ENCODE measurements at regions of chr22 and their contacts with region 1.

Region 1: DNA sequence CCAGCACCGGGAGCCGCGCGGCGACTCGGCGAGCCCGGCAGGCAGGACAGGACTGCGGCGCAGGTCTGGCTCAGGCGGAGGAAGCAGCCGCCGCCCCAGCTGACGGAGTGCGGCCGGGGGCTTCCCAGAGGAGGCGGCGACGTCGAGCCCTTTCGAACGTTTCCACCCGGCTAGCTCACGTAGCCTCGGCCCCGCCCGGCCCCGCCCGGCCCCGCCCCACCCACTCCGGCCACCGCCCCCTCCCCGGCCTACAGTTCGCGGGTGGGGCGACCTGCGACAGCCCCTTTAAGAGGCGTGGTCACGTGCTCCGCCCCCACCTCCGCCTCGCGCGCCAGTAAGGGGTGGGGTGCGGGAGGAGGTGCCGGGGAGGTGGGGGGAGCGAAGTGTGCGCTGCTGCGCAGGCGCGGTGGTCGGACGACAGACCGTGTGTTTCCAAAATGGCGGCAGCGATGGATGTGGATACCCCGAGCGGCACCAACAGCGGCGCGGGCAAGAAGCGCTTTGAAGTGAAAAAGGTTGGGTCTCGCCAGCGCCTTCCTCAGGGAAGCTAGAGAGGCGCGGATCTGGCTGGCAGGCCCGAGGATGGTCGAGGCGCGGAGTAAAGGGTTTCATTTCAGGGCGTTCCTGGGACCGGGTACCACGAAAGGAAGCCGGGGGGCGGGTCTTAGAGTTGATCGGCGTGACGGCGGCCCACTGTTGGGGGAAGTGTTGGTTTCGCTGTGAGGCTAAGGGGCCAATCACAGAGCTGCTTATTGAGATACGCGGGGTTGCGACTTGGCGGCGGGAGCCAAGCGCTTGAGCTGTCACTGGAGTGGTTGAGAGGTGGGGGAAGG is at the start of gene RBX1:
- DNase-seq: peak; percentile 99 to 100 (median 99)
- H3K4me3 ChIP-seq: peak within 1 kb of the TSS; percentile 86 to 92
- H3K4me3 Mint-ChIP-seq: peak within 1 kb of the TSS; percentile 96 to 100 (median 99)
- H3K27ac ChIP-seq: peak within 1 kb of the TSS; percentile 98
- H3K27ac Mint-ChIP-seq: peak within 1 kb of the TSS; percentile 97 to 100 (median 100)
- H3K4me1 ChIP-seq: peaks cover 33% of the 10 kb centered on the region
- H3K4me1 Mint-ChIP-seq: peaks cover 17 to 36% (median 30%) of the 10 kb centered on the region in 4 donors
- H3K27me3 ChIP-seq: no peaks in the 10 kb centered on the region
- H3K27me3 Mint-ChIP-seq: peaks cover 0 to 5% of the 10 kb centered on the region in 2 donors
- total RNA-seq, gene RBX1: 39.6 to 46.4 TPM

Region 2: DNA sequence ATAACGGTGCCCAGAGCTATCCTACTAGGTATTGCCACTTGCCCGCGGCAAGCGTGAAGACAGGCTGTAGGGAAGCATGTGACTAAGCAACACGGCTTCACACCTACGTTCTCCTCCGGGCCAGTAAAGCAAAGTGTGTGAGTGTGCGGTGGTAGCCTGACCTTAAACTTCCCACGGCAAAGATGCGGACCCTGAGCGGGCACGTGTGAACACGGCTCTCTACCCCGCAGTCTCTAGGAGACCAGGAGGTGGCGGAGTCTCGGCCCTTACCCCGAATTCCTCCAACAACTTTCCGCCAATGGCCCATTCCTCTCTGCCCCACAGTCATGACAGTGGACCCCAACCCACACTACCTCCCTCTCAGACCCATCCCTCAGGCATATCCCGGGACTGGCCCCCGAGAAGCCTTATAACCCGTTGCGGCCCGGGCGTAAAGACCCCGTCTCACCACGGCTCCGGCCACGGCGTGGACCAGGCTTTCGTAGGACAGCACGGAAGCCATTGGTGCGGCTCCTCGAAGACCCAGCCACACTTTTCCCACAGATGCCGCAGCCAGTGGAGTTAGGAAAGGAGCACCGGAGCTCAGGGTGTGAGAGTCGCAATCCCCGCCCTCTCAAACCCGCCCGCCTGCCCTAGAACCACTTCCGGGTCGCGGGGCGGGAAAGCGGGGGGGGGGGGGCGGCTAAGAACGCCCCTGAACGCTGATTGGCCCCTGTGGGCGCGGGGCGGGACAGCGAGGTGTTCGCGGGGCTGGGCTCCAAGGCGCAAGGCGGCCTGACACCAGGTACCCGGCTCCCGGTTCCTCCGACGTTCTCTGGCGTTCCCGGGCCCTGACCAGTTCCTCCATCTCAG is 132.2 kb before region 1 on chr22 and contains the start of gene SLC25A17:
- CTCF ChIA-PET with region 1: no interaction called
- POLR2A ChIA-PET with region 1: no interaction called
- intact Hi-C with region 1: loop called (anchors 5 kb)
- DNase-seq: peak; percentile 81 to 84 (median 82)
- H3K4me3 ChIP-seq: peak within 1 kb of the TSS; percentile 92 to 95
- H3K4me3 Mint-ChIP-seq: peak within 1 kb of the TSS; percentile 92 to 99 (median 97)
- H3K27ac ChIP-seq: peak within 1 kb of the TSS; percentile 81
- H3K27ac Mint-ChIP-seq: peak within 1 kb of the TSS; percentile 82 to 98 (median 95)
- H3K4me1 ChIP-seq: peaks cover 27% of the 10 kb centered on the region
- H3K4me1 Mint-ChIP-seq: peaks cover 29 to 46% (median 36%) of the 10 kb centered on the region in 4 donors
- H3K27me3 ChIP-seq: no peaks in the 10 kb centered on the region
- H3K27me3 Mint-ChIP-seq: no peaks in the 10 kb centered on the region
- total RNA-seq, gene SLC25A17: 15.4 to 15.6 TPM

Region 3: GRCh38 chr22:40973099-40973498 is 21.9 kb after region 1 on chr22:
- CTCF ChIA-PET with region 1: no interaction called
- POLR2A ChIA-PET with region 1: interaction called, 16 read pairs
- intact Hi-C with region 1: no loop called
- DNase-seq: no peak
- H3K4me3 ChIP-seq: no peak overlapping the region
- H3K4me3 Mint-ChIP-seq: no peak overlapping the region
- H3K27ac ChIP-seq: no peak overlapping the region
- H3K27ac Mint-ChIP-seq: no peak overlapping the region
- H3K4me1 ChIP-seq: no peaks in the 10 kb centered on the region
- H3K4me1 Mint-ChIP-seq: peaks cover 0 to 5% (median 0%) of the 10 kb centered on the region in 4 donors
- H3K27me3 ChIP-seq: no peaks in the 10 kb centered on the region
- H3K27me3 Mint-ChIP-seq: no peaks in the 10 kb centered on the region

Region 4: GRCh38 chr22:41096841-41097240 is 145.7 kb after region 1 on chr22:
- CTCF ChIA-PET with region 1: interaction called, 8 read pairs
- POLR2A ChIA-PET with region 1: interaction called, 211 read pairs
- intact Hi-C with region 1: no loop called
- DNase-seq: no peak
- H3K4me3 ChIP-seq: no peak overlapping the region
- H3K4me3 Mint-ChIP-seq: peak overlapping the region; percentile 43 to 100 (median 88)
- H3K27ac ChIP-seq: no peak overlapping the region
- H3K27ac Mint-ChIP-seq: peak overlapping the region in 6 of 7 donors; percentile 3 to 88 (median 44)
- H3K4me1 ChIP-seq: peaks cover 71% of the 10 kb centered on the region
- H3K4me1 Mint-ChIP-seq: peaks cover 43 to 87% (median 61%) of the 10 kb centered on the region in 4 donors
- H3K27me3 ChIP-seq: no peaks in the 10 kb centered on the region
- H3K27me3 Mint-ChIP-seq: no peaks in the 10 kb centered on the region

Region 5: DNA sequence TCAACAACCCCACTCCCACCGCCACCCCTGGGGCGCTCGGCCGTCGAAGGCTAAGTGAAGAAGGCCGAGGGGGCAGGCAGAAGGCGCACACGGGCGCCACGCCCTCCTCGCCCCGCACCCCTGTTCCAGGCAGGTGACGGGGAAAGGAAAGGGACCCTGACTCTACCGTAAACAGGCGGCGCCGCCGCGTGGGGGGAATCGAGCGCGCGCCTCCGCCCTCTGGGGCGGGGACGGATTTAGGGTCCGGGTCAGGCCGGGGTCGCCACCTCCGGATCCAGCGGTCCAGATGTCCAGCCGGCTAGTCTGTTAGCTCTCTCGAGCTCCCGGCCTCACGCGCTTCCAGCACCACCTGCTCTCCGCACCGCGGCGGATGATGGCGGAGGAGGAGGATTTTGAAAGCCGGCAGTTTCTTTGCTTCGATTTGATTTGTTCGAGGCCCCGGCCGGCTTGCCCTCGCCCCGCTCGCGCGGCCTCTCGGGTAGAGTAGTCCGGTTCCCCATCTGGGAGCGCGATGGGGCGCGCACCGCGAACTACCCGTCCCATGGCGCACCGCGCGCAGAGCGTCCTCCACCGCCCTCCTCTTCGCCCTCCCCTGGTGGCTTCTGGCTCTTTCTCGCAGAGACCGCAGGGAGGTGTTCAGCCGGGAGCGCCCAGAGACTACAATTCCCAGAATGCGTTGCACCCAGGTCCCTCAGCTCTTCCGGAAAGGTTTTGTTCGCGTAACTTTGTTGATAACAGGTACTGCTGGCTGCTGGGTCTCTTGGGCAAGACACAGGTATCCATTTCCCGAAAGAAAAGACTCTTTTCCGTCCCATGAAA is 334.9 kb after region 1 on chr22 and contains the start of gene RANGAP1:
- CTCF ChIA-PET with region 1: no interaction called
- POLR2A ChIA-PET with region 1: interaction called, 13 read pairs
- intact Hi-C with region 1: loop called (anchors 1 kb)
- DNase-seq: peak; percentile 98 to 99 (median 99)
- H3K4me3 ChIP-seq: peak within 1 kb of the TSS; percentile 82 to 94
- H3K4me3 Mint-ChIP-seq: peak within 1 kb of the TSS; percentile 92 to 98 (median 96)
- H3K27ac ChIP-seq: peak within 1 kb of the TSS; percentile 99
- H3K27ac Mint-ChIP-seq: peak within 1 kb of the TSS; percentile 96 to 99 (median 99)
- H3K4me1 ChIP-seq: peaks cover 23% of the 10 kb centered on the region
- H3K4me1 Mint-ChIP-seq: peaks cover 16 to 50% (median 36%) of the 10 kb centered on the region in 4 donors
- H3K27me3 ChIP-seq: no peaks in the 10 kb centered on the region
- H3K27me3 Mint-ChIP-seq: no peaks in the 10 kb centered on the region
- total RNA-seq, gene RANGAP1: 69.1 to 74.7 TPM

Region 6: GRCh38 chr22:41468381-41469217 is 517.4 kb after region 1 on chr22 and contains the starts of genes ACO2 and PHF5A:
- CTCF ChIA-PET with region 1: no interaction called
- POLR2A ChIA-PET with region 1: interaction called, 5 read pairs
- intact Hi-C with region 1: loop called (anchors 2 kb)
- DNase-seq: peak; percentile 98
- H3K4me3 ChIP-seq: peak within 1 kb of the TSS; percentile 67 to 90
- H3K4me3 Mint-ChIP-seq: peak within 1 kb of the TSS; percentile 86 to 95 (median 92)
- H3K27ac ChIP-seq: peak within 1 kb of the TSS; percentile 89
- H3K27ac Mint-ChIP-seq: peak within 1 kb of the TSS; percentile 96 to 100 (median 99)
- H3K4me1 ChIP-seq: peaks cover 28% of the 10 kb centered on the region
- H3K4me1 Mint-ChIP-seq: peaks cover 29 to 56% (median 44%) of the 10 kb centered on the region in 4 donors
- H3K27me3 ChIP-seq: no peaks in the 10 kb centered on the region
- H3K27me3 Mint-ChIP-seq: no peaks in the 10 kb centered on the region
- total RNA-seq, gene ACO2: 64.8 to 65.0 TPM
- total RNA-seq, gene PHF5A: 37.7 to 39.2 TPM